ENCODE measurements at regions of chr13 and their contacts with region 1.

Region 1: DNA sequence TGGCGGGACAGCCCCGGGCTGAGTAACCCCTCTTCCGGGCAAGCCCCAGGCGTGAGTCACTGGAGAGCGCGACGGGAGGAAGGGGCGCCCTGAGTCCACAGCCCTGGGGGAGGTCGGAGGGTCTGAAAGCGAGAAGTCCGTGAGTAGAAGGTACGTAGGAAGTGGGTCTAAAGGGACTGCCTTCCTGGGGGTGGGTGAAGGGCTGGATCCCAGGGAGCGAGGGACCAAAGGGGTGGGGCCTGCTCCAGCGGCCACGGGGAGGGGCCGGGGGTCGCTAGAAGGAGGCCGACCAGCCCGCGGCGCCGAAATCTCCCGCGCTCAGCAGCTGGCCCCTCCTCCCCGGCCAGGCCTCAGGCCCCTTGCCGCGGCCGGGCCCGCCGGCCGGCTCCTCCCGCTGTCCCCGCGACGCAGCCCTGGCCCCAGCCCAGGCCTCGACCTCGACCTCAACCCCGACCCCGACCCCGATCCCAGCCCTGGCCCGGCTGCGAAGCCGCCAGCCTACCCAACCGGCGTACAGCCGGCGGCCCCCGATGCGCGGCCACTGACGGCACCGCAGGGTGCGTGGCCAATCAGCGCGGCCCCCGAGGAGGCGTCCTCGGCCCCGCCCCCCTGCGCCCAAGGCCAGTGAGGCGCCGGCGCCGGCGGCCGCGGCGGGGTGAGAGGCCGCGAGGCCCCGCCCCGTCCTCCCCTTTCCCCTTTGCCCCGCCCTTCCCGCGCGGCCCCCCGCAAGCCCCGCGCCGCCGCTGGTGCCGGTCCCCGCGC is 22.6 kb downstream of the IPO5 start:
- DNase-seq: peak; percentile 97
- H3K4me3 Mint-ChIP-seq: peak overlapping the region; percentile 92
- H3K27ac Mint-ChIP-seq: peak overlapping the region; percentile 99
- H3K4me1 Mint-ChIP-seq: peaks cover 24% of the 10 kb centered on the region
- H3K27me3 Mint-ChIP-seq: peaks cover 10% of the 10 kb centered on the region

Region 2: GRCh38 chr13:97432917-97433726 is 542.9 kb before region 1 on chr13:
- intact Hi-C with region 1: loop called (anchors 1 kb)
- DNase-seq: peak; percentile 100
- H3K4me3 Mint-ChIP-seq: peak overlapping the region; percentile 94
- H3K27ac Mint-ChIP-seq: peak overlapping the region; percentile 98
- H3K4me1 Mint-ChIP-seq: peaks cover 32% of the 10 kb centered on the region
- H3K27me3 Mint-ChIP-seq: peaks cover 12% of the 10 kb centered on the region

Region 3: GRCh38 chr13:97844151-97844550 is 131.9 kb before region 1 on chr13:
- intact Hi-C with region 1: no loop called
- DNase-seq: no peak
- H3K4me3 Mint-ChIP-seq: no peak overlapping the region
- H3K27ac Mint-ChIP-seq: no peak overlapping the region
- H3K4me1 Mint-ChIP-seq: no peaks in the 10 kb centered on the region
- H3K27me3 Mint-ChIP-seq: peaks cover 2% of the 10 kb centered on the region

Region 4: GRCh38 chr13:97855570-97856303 is 120.3 kb before region 1 on chr13:
- intact Hi-C with region 1: loop called (anchors 10 kb)
- DNase-seq: peak; percentile 73
- H3K4me3 Mint-ChIP-seq: no peak overlapping the region
- H3K27ac Mint-ChIP-seq: no peak overlapping the region
- H3K4me1 Mint-ChIP-seq: no peaks in the 10 kb centered on the region
- H3K27me3 Mint-ChIP-seq: peaks cover 2% of the 10 kb centered on the region

Region 5: DNA sequence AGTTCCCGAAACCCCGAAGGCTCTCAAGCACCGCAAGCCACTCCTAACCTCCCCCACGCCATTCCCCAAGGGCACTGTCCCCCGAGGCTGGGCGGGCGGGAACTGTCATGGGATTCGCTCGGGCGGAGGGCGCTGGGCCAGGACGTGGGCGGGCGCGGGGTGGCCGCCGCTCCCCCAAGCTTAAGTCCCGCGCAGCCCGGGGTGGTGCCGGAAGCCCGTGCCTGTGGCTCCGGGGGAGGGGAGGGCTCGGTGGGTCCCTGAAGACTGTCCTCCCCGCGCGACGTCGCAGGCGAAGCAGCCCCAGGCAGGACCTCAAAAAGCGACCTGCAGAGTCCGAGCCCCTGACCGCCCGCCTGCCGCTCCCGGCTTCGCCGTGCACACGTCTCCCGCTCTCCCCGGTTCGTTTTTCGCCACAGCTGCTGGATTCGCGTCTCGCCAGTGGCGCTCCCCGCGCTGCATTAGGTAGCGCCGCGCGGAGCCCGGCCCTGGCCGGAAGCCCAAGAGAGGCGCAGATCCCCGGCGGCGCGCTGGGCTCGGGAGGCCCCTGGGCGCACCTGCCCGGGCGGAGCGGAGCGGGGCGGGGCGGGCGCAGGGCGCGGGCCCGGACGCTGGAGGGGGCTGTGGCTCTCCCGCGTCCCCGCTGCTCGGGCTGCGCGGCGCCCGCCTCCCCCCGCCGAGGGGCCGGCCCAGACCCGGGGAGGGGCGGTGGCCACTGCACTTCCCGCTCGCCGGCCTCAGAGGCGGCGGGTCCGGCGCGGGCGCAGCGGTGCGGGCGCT is 166.5 kb after region 1 on chr13 and contains the start of gene FARP1:
- intact Hi-C with region 1: loop called (anchors 10 kb)
- DNase-seq: peak; percentile 85
- H3K4me3 Mint-ChIP-seq: peak within 1 kb of the TSS; percentile 77
- H3K27ac Mint-ChIP-seq: no peak within 1 kb of the TSS
- H3K4me1 Mint-ChIP-seq: peaks cover 5% of the 10 kb centered on the region
- H3K27me3 Mint-ChIP-seq: peaks cover 64% of the 10 kb centered on the region
- total RNA-seq, gene FARP1: 0.28 and 0.37 TPM in 2 replicates

Region 6: DNA sequence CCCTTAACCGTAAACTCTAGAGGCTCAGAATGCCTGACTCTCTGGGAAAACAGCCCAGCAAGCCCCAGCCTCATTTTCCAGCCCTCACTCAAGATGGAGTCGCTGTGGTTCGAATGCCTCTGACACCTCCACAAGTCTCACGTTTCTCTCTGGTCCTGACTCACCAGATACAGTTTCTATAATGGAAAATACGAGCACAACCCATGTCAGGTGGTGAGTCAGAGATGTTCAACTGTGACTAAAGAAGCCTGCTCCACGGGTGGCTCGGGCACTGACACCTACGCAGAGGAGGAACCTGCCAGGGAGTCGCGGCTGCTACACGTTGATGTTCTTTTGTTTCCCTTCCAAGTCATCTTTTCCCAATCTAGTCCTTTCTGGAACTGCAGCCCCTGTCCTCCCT is 688.0 kb after region 1 on chr13:
- intact Hi-C with region 1: loop called (anchors 5 kb)
- DNase-seq: peak; percentile 73
- H3K4me3 Mint-ChIP-seq: peak overlapping the region; percentile 5
- H3K27ac Mint-ChIP-seq: peak overlapping the region; percentile 82
- H3K4me1 Mint-ChIP-seq: peaks cover 14% of the 10 kb centered on the region
- H3K27me3 Mint-ChIP-seq: peaks cover 18% of the 10 kb centered on the region

Region 7: DNA sequence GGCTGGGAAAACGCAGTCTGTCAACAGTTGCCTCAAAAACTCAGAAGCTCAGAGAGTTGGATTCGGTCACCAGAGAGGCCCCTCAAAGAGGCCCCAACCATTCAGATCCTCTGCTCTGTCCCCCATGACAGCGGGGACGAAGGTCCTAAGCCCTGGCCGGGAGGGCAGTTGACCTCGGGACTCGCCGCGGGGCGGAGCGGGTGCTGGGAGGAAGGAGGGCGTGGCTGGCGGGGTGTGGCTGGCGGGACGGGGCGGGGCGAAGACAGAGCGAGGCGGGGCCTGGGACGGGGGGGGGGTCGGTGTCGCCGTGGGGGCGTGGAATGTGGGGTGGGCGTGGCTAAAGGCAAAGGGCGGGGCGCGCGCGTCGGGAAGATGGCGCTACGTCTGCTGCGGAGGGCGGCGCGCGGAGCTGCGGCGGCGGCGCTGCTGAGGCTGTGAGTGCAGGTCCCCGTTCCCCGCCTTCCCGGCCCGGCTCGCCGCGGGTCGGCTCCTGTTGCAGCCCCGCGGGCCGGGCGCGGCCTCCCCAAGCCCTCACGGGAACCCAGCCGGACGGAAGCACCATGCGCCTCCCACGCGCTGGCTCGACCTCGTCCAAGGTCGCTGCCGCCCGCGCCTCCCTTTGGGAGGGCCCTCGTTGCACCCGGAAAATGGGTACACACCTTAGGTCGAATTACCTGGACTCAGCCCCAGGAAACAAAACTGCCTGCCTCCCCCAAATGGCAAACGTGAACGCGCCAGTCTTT is 1630.5 kb after region 1 on chr13:
- intact Hi-C with region 1: loop called (anchors 5 kb)
- DNase-seq: peak; percentile 96
- H3K4me3 Mint-ChIP-seq: peak within 1 kb of the TSS; percentile 87
- H3K27ac Mint-ChIP-seq: peak within 1 kb of the TSS; percentile 86
- H3K4me1 Mint-ChIP-seq: peaks cover 18% of the 10 kb centered on the region
- H3K27me3 Mint-ChIP-seq: no peaks in the 10 kb centered on the region